ENCODE measurements at regions of chr16 and their contacts with region 1.

Region 1: GRCh38 chr16:80974649-80975376 is 31.9 kb downstream of the CMC2 start:
- DNase-seq: no peak
- H3K4me3 ChIP-seq: no peak overlapping the region
- H3K4me3 Mint-ChIP-seq: no peak overlapping the region
- H3K27ac Mint-ChIP-seq: no peak overlapping the region
- H3K4me1 ChIP-seq: no peaks in the 10 kb centered on the region
- H3K4me1 Mint-ChIP-seq: peaks cover 5% of the 10 kb centered on the region
- H3K27me3 ChIP-seq: no peaks in the 10 kb centered on the region
- H3K27me3 Mint-ChIP-seq: no peaks in the 10 kb centered on the region
- CTCF ChIP-seq: peak; percentile 27 to 62

Region 2: GRCh38 chr16:80924372-80924978 is 50.3 kb before region 1 on chr16:
- CTCF ChIA-PET with region 1: no interaction called
- POLR2A ChIA-PET with region 1: no interaction called
- intact Hi-C with region 1: no loop called
- DNase-seq: peak in 1 of 2 experiments; percentile 49
- H3K4me3 ChIP-seq: no peak overlapping the region
- H3K4me3 Mint-ChIP-seq: no peak overlapping the region
- H3K27ac Mint-ChIP-seq: no peak overlapping the region
- H3K4me1 ChIP-seq: no peaks in the 10 kb centered on the region
- H3K4me1 Mint-ChIP-seq: no peaks in the 10 kb centered on the region
- H3K27me3 ChIP-seq: no peaks in the 10 kb centered on the region
- H3K27me3 Mint-ChIP-seq: no peaks in the 10 kb centered on the region
- CTCF ChIP-seq: peak; percentile 15 to 55

Region 3: GRCh38 chr16:80985611-80986010 is 10.8 kb after region 1 on chr16:
- CTCF ChIA-PET with region 1: interaction called, 10 read pairs
- POLR2A ChIA-PET with region 1: no interaction called
- intact Hi-C with region 1: no loop called
- DNase-seq: no peak
- H3K4me3 ChIP-seq: no peak overlapping the region
- H3K4me3 Mint-ChIP-seq: no peak overlapping the region
- H3K27ac Mint-ChIP-seq: peak overlapping the region; percentile 37
- H3K4me1 ChIP-seq: peaks cover 27% of the 10 kb centered on the region
- H3K4me1 Mint-ChIP-seq: peaks cover 41% of the 10 kb centered on the region
- H3K27me3 ChIP-seq: no peaks in the 10 kb centered on the region
- H3K27me3 Mint-ChIP-seq: no peaks in the 10 kb centered on the region
- CTCF ChIP-seq: no peak

Region 4: DNA sequence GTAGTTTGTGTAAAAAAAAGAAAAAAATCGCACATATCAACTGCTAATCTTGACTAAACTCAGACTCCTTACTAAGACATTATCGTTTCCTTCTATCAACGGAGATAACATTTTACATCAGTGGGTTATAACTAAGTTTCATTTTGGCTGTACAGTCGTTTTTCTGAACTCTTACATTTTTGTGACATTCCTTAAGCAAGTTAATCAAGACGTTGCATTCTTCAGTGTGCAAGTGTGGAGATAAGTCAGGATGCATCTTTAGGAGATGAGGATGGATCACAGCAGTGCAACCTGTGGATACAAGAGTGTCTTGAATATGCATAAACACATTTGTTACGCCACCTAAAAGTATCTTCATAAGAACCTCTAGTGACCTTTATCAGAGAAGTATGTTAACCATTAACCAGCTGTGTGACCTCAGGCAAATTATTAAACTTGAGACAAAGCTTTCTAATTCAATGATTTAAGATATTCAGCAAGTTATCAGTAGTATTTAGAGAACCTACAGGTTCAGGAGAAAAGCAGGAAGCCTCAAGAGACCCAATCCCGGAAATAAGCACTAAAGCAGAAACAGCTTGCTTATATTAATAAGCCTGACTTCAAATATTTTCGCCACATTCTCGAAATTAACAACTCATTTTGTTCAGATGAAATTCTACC is 22.5 kb after region 1 on chr16:
- CTCF ChIA-PET with region 1: interaction called, 12 read pairs
- POLR2A ChIA-PET with region 1: no interaction called
- intact Hi-C with region 1: loop called (anchors 1 kb)
- DNase-seq: peak in 1 of 2 experiments; percentile 69
- H3K4me3 ChIP-seq: peak overlapping the region; percentile 29
- H3K4me3 Mint-ChIP-seq: peak overlapping the region; percentile 75
- H3K27ac Mint-ChIP-seq: peak overlapping the region; percentile 80
- H3K4me1 ChIP-seq: peaks cover 58% of the 10 kb centered on the region
- H3K4me1 Mint-ChIP-seq: peaks cover 67% of the 10 kb centered on the region
- H3K27me3 ChIP-seq: no peaks in the 10 kb centered on the region
- H3K27me3 Mint-ChIP-seq: no peaks in the 10 kb centered on the region
- CTCF ChIP-seq: no peak

Region 5: GRCh38 chr16:81006814-81007696 is 32.2 kb after region 1 on chr16 and contains the starts of genes CENPN and CMC2:
- CTCF ChIA-PET with region 1: interaction called, 4 read pairs
- POLR2A ChIA-PET with region 1: interaction called, 3 read pairs
- intact Hi-C with region 1: loop called (anchors 1 kb)
- DNase-seq: peak; percentile 99
- H3K4me3 ChIP-seq: peak within 1 kb of the TSS; percentile 85
- H3K4me3 Mint-ChIP-seq: peak within 1 kb of the TSS; percentile 94
- H3K27ac Mint-ChIP-seq: peak within 1 kb of the TSS; percentile 100
- H3K4me1 ChIP-seq: peaks cover 13% of the 10 kb centered on the region; the same call in 1 of the 2 replicates
- H3K4me1 Mint-ChIP-seq: peaks cover 7% of the 10 kb centered on the region
- H3K27me3 ChIP-seq: no peaks in the 10 kb centered on the region
- H3K27me3 Mint-ChIP-seq: no peaks in the 10 kb centered on the region
- CTCF ChIP-seq: no peak
- total RNA-seq, gene CENPN: 100 and 105 TPM in 2 replicates
- total RNA-seq, gene CMC2: 94.1 and 101 TPM in 2 replicates